HEK293 (cell line): ENCODE measurements at regions of chr1 and their contacts with region 1.

Region 1: DNA sequence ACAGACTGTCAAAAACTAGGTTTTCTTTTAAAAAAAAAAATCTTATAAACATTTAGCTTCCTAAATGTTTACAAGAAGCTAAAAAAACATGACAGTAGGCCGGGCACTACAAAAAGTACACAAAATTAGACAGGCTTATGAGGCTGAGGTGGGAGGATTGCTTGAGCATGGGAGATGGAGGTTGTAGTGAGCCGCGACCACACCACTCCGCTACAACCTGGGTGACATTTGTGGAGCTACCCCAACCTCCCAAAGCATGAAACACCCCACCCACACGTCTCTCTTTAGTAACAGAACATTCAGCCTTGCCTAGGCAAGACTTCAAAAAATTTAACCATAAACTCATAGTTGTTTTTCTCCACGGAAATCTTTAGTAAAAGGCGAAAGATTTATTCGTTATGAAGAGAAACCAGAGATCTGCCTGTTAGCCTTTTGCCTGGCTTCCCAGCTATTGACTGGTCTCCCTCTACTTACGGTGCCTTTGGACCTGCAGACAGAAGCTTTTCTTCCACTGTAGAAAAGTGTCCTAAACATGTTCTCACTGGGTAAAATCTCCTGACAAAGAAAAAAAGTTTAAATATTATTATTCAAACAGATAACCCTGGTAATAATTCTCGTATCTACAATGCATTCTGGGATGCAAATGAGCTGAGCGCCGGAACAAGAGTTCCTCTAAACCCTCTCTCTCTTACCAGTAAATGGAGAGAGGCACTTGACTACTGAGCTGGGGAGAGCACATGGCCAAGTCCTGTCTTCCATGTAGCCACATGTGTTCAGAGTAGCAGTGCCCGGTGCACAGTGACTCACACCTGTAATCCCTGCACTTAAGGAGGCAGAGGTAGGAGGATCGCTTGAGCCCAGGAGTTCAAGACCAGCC is 9.2 kb downstream of the RNU5D-1 start:
- H3K4me3 ChIP-seq: no peak overlapping the region
- H3K27ac ChIP-seq: peak overlapping the region; percentile 57
- H3K4me1 ChIP-seq: no peaks in the 10 kb centered on the region
- CTCF ChIP-seq: no peak

Region 2: GRCh38 chr1:44674113-44675000 is 47.4 kb before region 1 on chr1 and contains the starts of genes ARMH1 and TMEM53:
- CTCF ChIA-PET with region 1: interaction called, 4 read pairs
- POLR2A ChIA-PET with region 1: interaction called, 15 read pairs
- H3K4me3 ChIP-seq: peak within 1 kb of the TSS; percentile 86
- H3K27ac ChIP-seq: no peak within 1 kb of the TSS
- H3K4me1 ChIP-seq: peaks cover 3% of the 10 kb centered on the region; the same call in 1 of the 2 replicates
- CTCF ChIP-seq: no peak; the same call in 1 of the 2 replicates

Region 3: DNA sequence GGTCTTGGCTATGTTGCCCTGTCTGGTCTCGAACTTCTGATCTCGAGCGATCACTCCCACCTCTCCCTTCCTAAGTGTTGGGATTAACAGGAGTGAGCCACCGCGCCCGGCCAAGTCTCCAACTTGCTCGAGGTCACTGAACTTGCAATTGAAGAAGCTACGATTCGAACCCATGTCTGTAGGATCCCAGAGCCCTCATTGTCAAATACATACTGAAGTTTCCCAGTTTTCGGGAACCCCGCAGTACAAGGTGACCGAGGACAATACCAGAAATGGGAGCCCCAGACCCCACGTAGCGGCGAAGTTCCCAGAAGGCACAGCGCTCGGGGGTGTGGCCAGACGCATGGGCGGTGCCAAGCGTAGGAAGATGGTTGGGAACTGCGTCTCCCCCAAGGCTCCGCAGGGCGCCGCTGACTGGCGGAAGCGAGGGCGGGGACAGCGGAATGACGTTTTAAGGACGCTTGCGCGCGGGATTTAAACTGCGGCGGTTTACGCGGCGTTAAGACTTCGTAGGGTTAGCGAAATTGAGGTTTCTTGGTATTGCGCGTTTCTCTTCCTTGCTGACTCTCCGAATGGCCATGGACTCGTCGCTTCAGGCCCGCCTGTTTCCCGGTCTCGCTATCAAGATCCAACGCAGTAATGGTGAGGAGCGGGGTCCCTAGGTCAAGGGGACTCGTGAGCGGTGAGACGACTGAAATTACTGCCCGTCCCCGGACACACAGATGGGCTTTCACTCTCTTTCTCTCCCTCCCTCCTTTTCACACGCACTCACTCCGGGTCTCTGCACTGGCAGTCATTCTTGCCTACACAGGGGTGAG is 17.8 kb after region 1 on chr1 and contains the start of gene KIF2C:
- CTCF ChIA-PET with region 1: no interaction called
- POLR2A ChIA-PET with region 1: interaction called, 102 read pairs
- H3K4me3 ChIP-seq: peak within 1 kb of the TSS; percentile 66
- H3K27ac ChIP-seq: peak within 1 kb of the TSS; percentile 78
- H3K4me1 ChIP-seq: peaks cover 3% of the 10 kb centered on the region; the same call in 1 of the 2 replicates
- CTCF ChIP-seq: no peak

Region 4: GRCh38 chr1:44786138-44786840 is 64.6 kb after region 1 on chr1:
- CTCF ChIA-PET with region 1: interaction called, 4 read pairs
- POLR2A ChIA-PET with region 1: interaction called, 18 read pairs
- H3K4me3 ChIP-seq: peak overlapping the region; percentile 48
- H3K27ac ChIP-seq: peak overlapping the region; percentile 18; the same call in 1 of the 2 replicates
- H3K4me1 ChIP-seq: 0 out of 2 replicates have a peak, but pooled peaks cover 2% of the 10 kb centered on the region
- CTCF ChIP-seq: peak; percentile 99

Region 5: GRCh38 chr1:44807262-44808062 is 85.7 kb after region 1 on chr1 and contains the start of gene DYNLT4:
- CTCF ChIA-PET with region 1: no interaction called
- POLR2A ChIA-PET with region 1: interaction called, 11 read pairs
- H3K4me3 ChIP-seq: peak within 1 kb of the TSS; percentile 1
- H3K27ac ChIP-seq: peak within 1 kb of the TSS; percentile 72
- H3K4me1 ChIP-seq: peaks cover 19% of the 10 kb centered on the region
- CTCF ChIP-seq: no peak